GM12878 (cell line): ENCODE measurements at regions of chr9 and their contacts with region 1.

Region 1: DNA sequence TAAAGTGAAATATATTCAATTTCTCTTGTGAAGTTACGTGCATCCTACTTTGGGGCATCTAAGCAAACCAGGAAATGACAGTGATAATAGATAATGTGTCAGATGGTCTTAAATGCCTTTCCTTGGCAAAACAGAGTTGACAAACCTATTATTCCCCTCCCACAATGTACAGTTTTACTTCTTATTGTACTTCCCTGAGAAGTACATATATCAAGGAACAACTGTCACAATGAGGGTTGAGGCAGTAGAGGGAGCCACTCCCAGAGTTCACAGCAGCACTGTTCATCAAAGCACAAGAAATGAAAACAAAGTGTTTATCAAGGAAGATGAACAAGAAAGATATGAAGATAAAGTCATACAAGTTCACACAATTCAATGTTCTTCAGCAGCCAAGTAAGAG is 41.1 kb downstream of the ELAVL2 start:
- DNase-seq: no peak
- ATAC-seq: no peak
- H3K4me3 ChIP-seq: no peak overlapping the region
- H3K27ac ChIP-seq: no peak overlapping the region
- H3K4me1 ChIP-seq: no peaks in the 10 kb centered on the region
- H3K27me3 ChIP-seq: no peaks in the 10 kb centered on the region
- CTCF ChIP-seq: no peak
- EP300 ChIP-seq: no peak
- POLR2A ChIP-seq: no peak
- RAD21 ChIP-seq: no peak

Region 2: GRCh38 chr9:23302281-23302680 is 482.7 kb before region 1 on chr9:
- CTCF ChIA-PET with region 1: no interaction called
- POLR2A ChIA-PET with region 1: no interaction called
- RAD21 ChIA-PET with region 1: no interaction called
- SMC1A ChIA-PET with region 1: no interaction called
- in situ Hi-C with region 1: no loop called
- intact Hi-C with region 1: no loop called
- DNase-seq: no peak
- ATAC-seq: no peak
- H3K4me3 ChIP-seq: no peak overlapping the region
- H3K27ac ChIP-seq: no peak overlapping the region
- H3K4me1 ChIP-seq: no peaks in the 10 kb centered on the region
- H3K27me3 ChIP-seq: no peaks in the 10 kb centered on the region
- CTCF ChIP-seq: no peak
- EP300 ChIP-seq: no peak
- POLR2A ChIP-seq: no peak
- RAD21 ChIP-seq: no peak

Region 3: GRCh38 chr9:23644896-23645295 is 140.1 kb before region 1 on chr9:
- CTCF ChIA-PET with region 1: no interaction called
- POLR2A ChIA-PET with region 1: no interaction called
- RAD21 ChIA-PET with region 1: no interaction called
- SMC1A ChIA-PET with region 1: no interaction called
- in situ Hi-C with region 1: no loop called
- intact Hi-C with region 1: no loop called
- DNase-seq: no peak
- ATAC-seq: no peak
- H3K4me3 ChIP-seq: no peak overlapping the region
- H3K27ac ChIP-seq: no peak overlapping the region
- H3K4me1 ChIP-seq: no peaks in the 10 kb centered on the region
- H3K27me3 ChIP-seq: no peaks in the 10 kb centered on the region
- CTCF ChIP-seq: no peak
- EP300 ChIP-seq: no peak
- POLR2A ChIP-seq: no peak
- RAD21 ChIP-seq: no peak

Region 4: GRCh38 chr9:23769307-23769935 is 15.5 kb before region 1 on chr9:
- CTCF ChIA-PET with region 1: interaction called, 4 read pairs
- POLR2A ChIA-PET with region 1: interaction called, 3 read pairs
- RAD21 ChIA-PET with region 1: interaction called, 13 read pairs
- SMC1A ChIA-PET with region 1: interaction called, 9 read pairs
- in situ Hi-C with region 1: no loop called
- intact Hi-C with region 1: no loop called
- DNase-seq: no peak
- ATAC-seq: peak; percentile 58
- H3K4me3 ChIP-seq: no peak overlapping the region
- H3K27ac ChIP-seq: no peak overlapping the region
- H3K4me1 ChIP-seq: no peaks in the 10 kb centered on the region
- H3K27me3 ChIP-seq: no peaks in the 10 kb centered on the region
- CTCF ChIP-seq: no peak
- EP300 ChIP-seq: no peak
- POLR2A ChIP-seq: no peak
- RAD21 ChIP-seq: no peak

Region 5: DNA sequence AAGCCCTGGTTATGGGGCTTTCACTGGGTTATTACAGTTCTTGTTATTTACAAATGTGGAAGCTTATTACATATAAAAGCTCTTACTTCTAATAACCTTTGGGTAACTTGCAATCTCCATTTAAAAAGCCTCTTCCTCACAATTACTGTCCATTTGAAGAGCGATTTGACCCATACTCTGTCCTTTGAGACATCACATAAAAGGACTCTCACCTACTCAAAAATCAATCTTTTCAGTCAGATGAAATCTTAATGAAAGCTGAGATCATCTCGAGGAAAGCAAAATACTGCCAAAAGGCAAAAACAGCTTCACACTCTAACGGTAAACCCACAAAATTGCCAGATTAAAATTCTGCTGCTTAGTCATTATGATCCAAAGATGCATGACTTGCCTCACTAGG is 11.2 kb after region 1 on chr9:
- CTCF ChIA-PET with region 1: interaction called, 7 read pairs
- POLR2A ChIA-PET with region 1: interaction called, 4 read pairs
- RAD21 ChIA-PET with region 1: interaction called, 21 read pairs
- SMC1A ChIA-PET with region 1: interaction called, 13 read pairs
- in situ Hi-C with region 1: no loop called
- intact Hi-C with region 1: no loop called
- DNase-seq: no peak
- ATAC-seq: no peak; the same call in 2 of the 3 replicates
- H3K4me3 ChIP-seq: no peak overlapping the region
- H3K27ac ChIP-seq: no peak overlapping the region
- H3K4me1 ChIP-seq: no peaks in the 10 kb centered on the region
- H3K27me3 ChIP-seq: no peaks in the 10 kb centered on the region
- CTCF ChIP-seq: no peak
- EP300 ChIP-seq: no peak
- POLR2A ChIP-seq: no peak
- RAD21 ChIP-seq: no peak

Region 6: GRCh38 chr9:23803216-23803615 is 18.3 kb after region 1 on chr9:
- CTCF ChIA-PET with region 1: interaction called, 4 read pairs
- POLR2A ChIA-PET with region 1: interaction called, 3 read pairs
- RAD21 ChIA-PET with region 1: interaction called, 7 read pairs
- SMC1A ChIA-PET with region 1: interaction called, 11 read pairs
- in situ Hi-C with region 1: no loop called
- intact Hi-C with region 1: no loop called
- DNase-seq: no peak
- ATAC-seq: peak; percentile 73
- H3K4me3 ChIP-seq: no peak overlapping the region
- H3K27ac ChIP-seq: no peak overlapping the region
- H3K4me1 ChIP-seq: no peaks in the 10 kb centered on the region
- H3K27me3 ChIP-seq: no peaks in the 10 kb centered on the region
- CTCF ChIP-seq: no peak
- EP300 ChIP-seq: no peak
- POLR2A ChIP-seq: no peak
- RAD21 ChIP-seq: no peak

Region 7: GRCh38 chr9:23826120-23826629 is 41.2 kb after region 1 on chr9 and contains the start of gene ELAVL2:
- CTCF ChIA-PET with region 1: interaction called, 5 read pairs
- POLR2A ChIA-PET with region 1: interaction called, 6 read pairs
- RAD21 ChIA-PET with region 1: no interaction called
- SMC1A ChIA-PET with region 1: interaction called, 10 read pairs
- in situ Hi-C with region 1: no loop called
- intact Hi-C with region 1: no loop called
- DNase-seq: peak; percentile 26
- ATAC-seq: peak; percentile 85
- H3K4me3 ChIP-seq: no peak within 1 kb of the TSS
- H3K27ac ChIP-seq: no peak within 1 kb of the TSS
- H3K4me1 ChIP-seq: no peaks in the 10 kb centered on the region
- H3K27me3 ChIP-seq: no peaks in the 10 kb centered on the region
- CTCF ChIP-seq: no peak
- EP300 ChIP-seq: no peak
- POLR2A ChIP-seq: no peak
- RAD21 ChIP-seq: no peak
- polyA plus RNA-seq, gene ELAVL2: 0.24 to 0.72 TPM

Region 8: GRCh38 chr9:23941051-23941450 is 156.1 kb after region 1 on chr9:
- CTCF ChIA-PET with region 1: no interaction called
- POLR2A ChIA-PET with region 1: no interaction called
- RAD21 ChIA-PET with region 1: no interaction called
- SMC1A ChIA-PET with region 1: no interaction called
- in situ Hi-C with region 1: no loop called
- intact Hi-C with region 1: no loop called
- DNase-seq: no peak
- ATAC-seq: no peak; the same call in 2 of the 3 replicates
- H3K4me3 ChIP-seq: no peak overlapping the region
- H3K27ac ChIP-seq: no peak overlapping the region
- H3K4me1 ChIP-seq: no peaks in the 10 kb centered on the region
- H3K27me3 ChIP-seq: no peaks in the 10 kb centered on the region
- CTCF ChIP-seq: no peak
- EP300 ChIP-seq: no peak
- POLR2A ChIP-seq: no peak
- RAD21 ChIP-seq: no peak